GM12878 (cell line): ENCODE measurements at regions of chr13 and their contacts with region 1.

Region 1: DNA sequence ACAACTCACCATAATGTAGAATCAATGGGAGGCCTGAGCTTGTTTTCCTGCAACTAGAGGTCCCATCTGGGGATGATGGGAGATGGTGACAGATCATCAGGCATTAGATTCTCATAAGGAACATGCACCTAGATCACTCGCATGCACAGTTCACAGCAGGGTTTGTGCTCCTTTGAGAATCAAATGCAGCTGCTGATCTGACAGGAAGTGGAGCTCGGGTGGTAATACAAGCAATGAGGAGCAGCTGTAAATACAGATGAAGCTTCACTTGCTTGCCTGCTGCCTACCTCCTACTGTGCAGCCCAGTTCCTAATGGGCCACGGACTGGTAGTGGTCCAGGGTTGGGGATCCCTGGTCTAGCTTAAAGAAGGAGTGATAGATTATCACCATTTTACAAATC is 33.0 kb downstream of the KPNA3 start:
- DNase-seq: no peak
- ATAC-seq: no peak
- H3K4me3 ChIP-seq: no peak overlapping the region
- H3K27ac ChIP-seq: no peak overlapping the region
- H3K4me1 ChIP-seq: peaks cover 4% of the 10 kb centered on the region; the same call in 1 of the 2 replicates
- H3K27me3 ChIP-seq: no peaks in the 10 kb centered on the region
- CTCF ChIP-seq: no peak
- EP300 ChIP-seq: no peak
- POLR2A ChIP-seq: no peak
- RAD21 ChIP-seq: no peak

Region 2: GRCh38 chr13:49772828-49773227 is 13.3 kb after region 1 on chr13:
- CTCF ChIA-PET with region 1: interaction called, 5 read pairs
- POLR2A ChIA-PET with region 1: no interaction called
- RAD21 ChIA-PET with region 1: no interaction called
- SMC1A ChIA-PET with region 1: interaction called, 12 read pairs
- in situ Hi-C with region 1: no loop called
- intact Hi-C with region 1: no loop called
- DNase-seq: no peak
- ATAC-seq: no peak
- H3K4me3 ChIP-seq: no peak overlapping the region
- H3K27ac ChIP-seq: no peak overlapping the region
- H3K4me1 ChIP-seq: peaks cover 6% of the 10 kb centered on the region; the same call in 1 of the 2 replicates
- H3K27me3 ChIP-seq: no peaks in the 10 kb centered on the region
- CTCF ChIP-seq: no peak
- EP300 ChIP-seq: no peak
- POLR2A ChIP-seq: no peak
- RAD21 ChIP-seq: no peak